Naive thymus-derived CD4-positive, alpha-beta T cell (primary cell): ENCODE measurements at regions of chr1 and their contacts with region 1.

Region 1: GRCh38 chr1:38012363-38013226 is at the start of gene UTP11:
- DNase-seq: peak; percentile 63 to 95 (median 93)
- ATAC-seq: peak; percentile 97
- H3K4me3 ChIP-seq: peak within 1 kb of the TSS; percentile 84
- H3K4me3 Mint-ChIP-seq: peak within 1 kb of the TSS; percentile 96 to 99 (median 99)
- H3K27ac ChIP-seq: peak within 1 kb of the TSS; percentile 87
- H3K27ac Mint-ChIP-seq: peak within 1 kb of the TSS; percentile 95 to 99 (median 97)
- H3K4me1 ChIP-seq: peaks cover 10 to 14% of the 10 kb centered on the region in 2 donors
- H3K4me1 Mint-ChIP-seq: peaks cover 25 to 70% (median 47%) of the 10 kb centered on the region in 7 donors
- H3K27me3 ChIP-seq: no peaks in the 10 kb centered on the region
- H3K27me3 Mint-ChIP-seq: no peaks in the 10 kb centered on the region
- total RNA-seq, gene UTP11: 8.2 to 42.8 (median 15.7) TPM

Region 2: GRCh38 chr1:36300526-36300925 is 1712.1 kb before region 1 on chr1:
- CTCF ChIA-PET with region 1: no interaction called
- POLR2A ChIA-PET with region 1: no interaction called
- intact Hi-C with region 1: no loop called
- DNase-seq: no peak
- ATAC-seq: peak; percentile 77
- H3K4me3 ChIP-seq: no peak overlapping the region
- H3K4me3 Mint-ChIP-seq: peak overlapping the region in 1 of 10 donors; percentile 7
- H3K27ac ChIP-seq: no peak overlapping the region
- H3K27ac Mint-ChIP-seq: peak overlapping the region in 7 of 9 donors; percentile 36 to 75 (median 57)
- H3K4me1 ChIP-seq: no peaks in the 10 kb centered on the region
- H3K4me1 Mint-ChIP-seq: peaks cover 0 to 19% (median 6%) of the 10 kb centered on the region in 7 donors
- H3K27me3 ChIP-seq: no peaks in the 10 kb centered on the region
- H3K27me3 Mint-ChIP-seq: no peaks in the 10 kb centered on the region

Region 3: GRCh38 chr1:37553927-37554808 is 458.4 kb before region 1 on chr1 and contains the start of gene SNIP1:
- CTCF ChIA-PET with region 1: no interaction called
- POLR2A ChIA-PET with region 1: no interaction called
- intact Hi-C with region 1: loop called in 1 of 2 experiments (anchors 1 kb)
- DNase-seq: peak; percentile 67 to 94 (median 92)
- ATAC-seq: peak; percentile 99
- H3K4me3 ChIP-seq: peak within 1 kb of the TSS; percentile 92
- H3K4me3 Mint-ChIP-seq: peak within 1 kb of the TSS; percentile 97 to 100 (median 99)
- H3K27ac ChIP-seq: peak within 1 kb of the TSS; percentile 94
- H3K27ac Mint-ChIP-seq: peak within 1 kb of the TSS; percentile 91 to 99 (median 98)
- H3K4me1 ChIP-seq: peaks cover 10 to 24% of the 10 kb centered on the region in 2 donors
- H3K4me1 Mint-ChIP-seq: peaks cover 23 to 51% (median 45%) of the 10 kb centered on the region in 7 donors
- H3K27me3 ChIP-seq: no peaks in the 10 kb centered on the region
- H3K27me3 Mint-ChIP-seq: peaks cover 0 to 6% (median 0%) of the 10 kb centered on the region in 5 donors
- total RNA-seq, gene SNIP1: 27.8 to 53.6 (median 36.7) TPM

Region 4: DNA sequence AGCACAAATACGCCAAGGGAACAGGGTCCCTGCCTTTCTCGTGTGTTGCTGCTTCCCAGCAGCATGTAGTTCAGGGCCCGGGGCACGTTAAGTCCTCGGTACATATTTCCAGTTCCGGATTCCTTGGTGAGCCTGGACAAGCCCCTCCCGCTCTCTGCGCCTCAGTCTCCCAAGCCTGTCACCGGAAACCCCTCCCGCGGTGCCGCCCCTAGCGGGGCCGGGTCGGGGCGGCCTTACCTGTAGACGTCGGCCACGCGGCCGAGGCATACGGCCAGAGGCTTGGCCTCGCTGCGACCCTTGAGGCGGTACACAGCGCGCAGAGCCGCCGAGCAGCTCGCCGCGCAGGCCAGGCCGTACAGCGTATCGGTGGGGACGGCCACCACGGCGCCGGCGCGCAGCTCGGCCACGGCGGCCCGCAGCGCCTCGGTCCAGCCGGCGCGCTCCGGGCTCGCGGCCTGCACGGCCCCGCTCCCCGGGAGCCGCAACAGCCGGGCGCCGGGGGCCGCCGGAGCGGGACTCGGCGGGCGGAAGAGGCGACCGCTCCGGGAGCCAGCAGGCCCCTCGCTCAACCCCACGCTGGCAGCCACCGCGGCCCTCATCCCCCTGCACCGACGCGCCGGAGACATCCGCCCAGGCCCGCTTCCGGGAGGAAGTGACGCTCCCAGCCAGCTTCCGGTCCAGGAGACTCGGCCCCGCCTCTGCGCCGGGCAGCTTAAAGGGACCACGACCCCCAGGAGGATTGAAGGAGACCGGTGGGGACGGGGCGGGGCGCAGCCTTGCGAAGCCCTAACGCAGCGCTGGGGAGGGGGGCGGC is 204.8 kb before region 1 on chr1 and contains the starts of genes C1orf122 and YRDC:
- CTCF ChIA-PET with region 1: no interaction called
- POLR2A ChIA-PET with region 1: no interaction called
- intact Hi-C with region 1: loop called in 1 of 2 experiments (anchors 1 kb)
- DNase-seq: peak; percentile 82 to 94 (median 88)
- ATAC-seq: peak; percentile 94
- H3K4me3 ChIP-seq: peak within 1 kb of the TSS; percentile 89
- H3K4me3 Mint-ChIP-seq: peak within 1 kb of the TSS; percentile 85 to 99 (median 96)
- H3K27ac ChIP-seq: peak within 1 kb of the TSS; percentile 96
- H3K27ac Mint-ChIP-seq: peak within 1 kb of the TSS; percentile 89 to 98 (median 96)
- H3K4me1 ChIP-seq: peaks cover 15 to 20% of the 10 kb centered on the region in 2 donors
- H3K4me1 Mint-ChIP-seq: peaks cover 27 to 55% (median 34%) of the 10 kb centered on the region in 7 donors
- H3K27me3 ChIP-seq: no peaks in the 10 kb centered on the region
- H3K27me3 Mint-ChIP-seq: no peaks in the 10 kb centered on the region
- total RNA-seq, gene C1orf122: 11.4 to 20.6 (median 11.7) TPM
- total RNA-seq, gene YRDC: 13.1 to 30.6 (median 22.3) TPM

Region 5: DNA sequence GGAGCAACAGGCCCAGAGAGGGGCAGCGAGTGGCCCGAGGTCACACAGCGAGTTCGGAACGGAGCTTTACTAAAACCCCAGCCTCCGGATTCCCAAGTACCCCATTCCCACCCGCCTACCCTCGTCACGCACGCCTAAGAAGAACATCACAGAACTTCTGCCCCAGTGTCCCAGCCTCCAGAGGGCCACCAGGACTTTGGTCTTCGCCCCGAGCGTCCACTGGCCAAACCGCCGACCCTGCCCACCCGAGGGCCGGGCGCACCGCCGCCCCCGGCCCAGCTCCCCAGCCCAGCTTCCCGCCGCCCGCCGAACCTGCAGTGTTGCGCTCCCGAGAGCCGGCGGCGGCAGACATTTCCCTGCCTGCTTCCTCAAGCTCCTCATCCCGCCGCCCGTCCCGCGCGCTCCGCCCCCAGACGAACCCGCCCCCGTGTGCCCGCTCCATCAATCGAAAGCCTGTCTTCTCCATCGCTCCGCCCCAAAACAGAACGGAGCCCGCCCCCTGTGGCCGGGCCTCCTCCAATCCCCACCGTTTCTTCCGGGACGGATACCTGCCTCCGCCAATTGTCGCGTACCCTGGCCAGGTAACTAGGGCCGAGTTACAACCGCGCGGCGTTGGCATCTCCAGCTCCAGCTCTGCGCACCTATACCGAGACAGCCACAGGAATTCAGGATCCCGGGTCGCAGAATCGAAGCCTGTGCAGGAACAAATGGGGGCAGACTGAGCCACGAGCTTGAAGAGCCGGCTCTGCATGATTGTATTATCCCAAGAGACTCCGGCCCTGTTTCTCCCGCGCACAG is 81.0 kb before region 1 on chr1:
- CTCF ChIA-PET with region 1: no interaction called
- POLR2A ChIA-PET with region 1: no interaction called
- intact Hi-C with region 1: loop called (anchors 1 to 2 kb)
- DNase-seq: peak; percentile 92 to 97 (median 96)
- ATAC-seq: peak; percentile 100
- H3K4me3 ChIP-seq: peak overlapping the region; percentile 67
- H3K4me3 Mint-ChIP-seq: peak overlapping the region; percentile 89 to 99 (median 98)
- H3K27ac ChIP-seq: peak overlapping the region; percentile 79
- H3K27ac Mint-ChIP-seq: peak overlapping the region; percentile 78 to 94 (median 87)
- H3K4me1 ChIP-seq: peaks cover 15 to 17% of the 10 kb centered on the region in 2 donors
- H3K4me1 Mint-ChIP-seq: peaks cover 22 to 52% (median 39%) of the 10 kb centered on the region in 7 donors
- H3K27me3 ChIP-seq: no peaks in the 10 kb centered on the region
- H3K27me3 Mint-ChIP-seq: peaks cover 0 to 3% (median 0%) of the 10 kb centered on the region in 5 donors

Region 6: GRCh38 chr1:37989361-37989930 is 23.1 kb before region 1 on chr1:
- CTCF ChIA-PET with region 1: interaction called, 14 read pairs
- POLR2A ChIA-PET with region 1: interaction called, 24 read pairs
- intact Hi-C with region 1: loop called (anchors 1 kb)
- DNase-seq: peak in 2 of 9 donors; percentile 46 to 47
- ATAC-seq: peak; percentile 33
- H3K4me3 ChIP-seq: peak overlapping the region; percentile 97
- H3K4me3 Mint-ChIP-seq: peak overlapping the region; percentile 89 to 100 (median 99)
- H3K27ac ChIP-seq: peak overlapping the region; percentile 79
- H3K27ac Mint-ChIP-seq: peak overlapping the region; percentile 87 to 99 (median 91)
- H3K4me1 ChIP-seq: peaks cover 13 to 17% of the 10 kb centered on the region in 2 donors
- H3K4me1 Mint-ChIP-seq: peaks cover 16 to 30% (median 24%) of the 10 kb centered on the region in 7 donors
- H3K27me3 ChIP-seq: no peaks in the 10 kb centered on the region
- H3K27me3 Mint-ChIP-seq: no peaks in the 10 kb centered on the region

Region 7: DNA sequence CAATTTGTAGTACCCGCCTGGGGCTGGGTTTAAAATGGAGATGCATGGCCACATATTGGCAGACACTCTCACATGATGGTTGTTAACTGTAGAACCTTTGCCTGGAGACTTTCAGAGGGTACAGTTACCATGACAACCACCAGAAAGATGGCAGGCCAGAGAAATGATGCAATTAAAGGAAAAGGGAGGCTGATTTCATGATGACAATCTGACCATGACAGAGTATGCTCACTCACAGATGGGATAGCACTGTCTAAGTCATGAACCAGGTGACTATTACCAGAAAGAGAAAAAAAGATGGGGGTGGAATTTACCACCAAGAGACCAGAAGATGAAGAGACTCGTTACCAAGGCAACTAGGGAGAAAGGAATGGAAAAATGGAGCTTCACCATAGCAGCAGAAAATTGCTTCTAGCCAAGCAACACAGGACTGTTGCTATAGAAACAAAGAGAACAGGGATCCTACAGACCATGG is 1874.2 kb after region 1 on chr1:
- CTCF ChIA-PET with region 1: no interaction called
- POLR2A ChIA-PET with region 1: no interaction called
- intact Hi-C with region 1: loop called in 1 of 2 experiments (anchors 10 kb)
- DNase-seq: no peak
- ATAC-seq: no peak
- H3K4me3 ChIP-seq: no peak overlapping the region
- H3K4me3 Mint-ChIP-seq: no peak overlapping the region
- H3K27ac ChIP-seq: no peak overlapping the region
- H3K27ac Mint-ChIP-seq: no peak overlapping the region
- H3K4me1 ChIP-seq: peaks cover 9 to 11% of the 10 kb centered on the region in 2 donors
- H3K4me1 Mint-ChIP-seq: peaks cover 11 to 22% (median 15%) of the 10 kb centered on the region in 7 donors
- H3K27me3 ChIP-seq: no peaks in the 10 kb centered on the region
- H3K27me3 Mint-ChIP-seq: peaks cover under 1 to 12% (median 6%) of the 10 kb centered on the region in 5 donors